CD4-positive, alpha-beta memory T cell (primary cell): ENCODE measurements at regions of chr1 and their contacts with region 1.

Region 1: GRCh38 chr1:88655685-88656299 is 28.3 kb upstream of the PKN2 start:
- DNase-seq: peak in 4 of 5 donors; percentile 27 to 34 (median 30)
- H3K4me3 ChIP-seq: no peak overlapping the region
- H3K4me3 Mint-ChIP-seq: no peak overlapping the region
- H3K27ac ChIP-seq: no peak overlapping the region
- H3K27ac Mint-ChIP-seq: peak overlapping the region in 1 of 7 donors; percentile 14
- H3K4me1 ChIP-seq: peaks cover 5% of the 10 kb centered on the region
- H3K4me1 Mint-ChIP-seq: peaks cover 2 to 8% (median 6%) of the 10 kb centered on the region in 4 donors
- H3K27me3 ChIP-seq: no peaks in the 10 kb centered on the region
- H3K27me3 Mint-ChIP-seq: peaks cover 0 to 4% of the 10 kb centered on the region in 2 donors

Region 2: GRCh38 chr1:88683541-88684481 is 28.0 kb after region 1 on chr1 and contains the start of gene PKN2:
- CTCF ChIA-PET with region 1: interaction called, 53 read pairs
- POLR2A ChIA-PET with region 1: interaction called, 16 read pairs
- intact Hi-C with region 1: loop called (anchors 1 kb)
- DNase-seq: peak; percentile 97 to 98 (median 98)
- H3K4me3 ChIP-seq: peak within 1 kb of the TSS; percentile 43 to 82
- H3K4me3 Mint-ChIP-seq: peak within 1 kb of the TSS; percentile 95 to 99 (median 97)
- H3K27ac ChIP-seq: peak within 1 kb of the TSS; percentile 85
- H3K27ac Mint-ChIP-seq: peak within 1 kb of the TSS; percentile 96 to 99 (median 98)
- H3K4me1 ChIP-seq: peaks cover 39% of the 10 kb centered on the region
- H3K4me1 Mint-ChIP-seq: peaks cover 15 to 58% (median 24%) of the 10 kb centered on the region in 4 donors
- H3K27me3 ChIP-seq: no peaks in the 10 kb centered on the region
- H3K27me3 Mint-ChIP-seq: no peaks in the 10 kb centered on the region
- total RNA-seq, gene PKN2: 38.6 to 42.0 TPM

Region 3: DNA sequence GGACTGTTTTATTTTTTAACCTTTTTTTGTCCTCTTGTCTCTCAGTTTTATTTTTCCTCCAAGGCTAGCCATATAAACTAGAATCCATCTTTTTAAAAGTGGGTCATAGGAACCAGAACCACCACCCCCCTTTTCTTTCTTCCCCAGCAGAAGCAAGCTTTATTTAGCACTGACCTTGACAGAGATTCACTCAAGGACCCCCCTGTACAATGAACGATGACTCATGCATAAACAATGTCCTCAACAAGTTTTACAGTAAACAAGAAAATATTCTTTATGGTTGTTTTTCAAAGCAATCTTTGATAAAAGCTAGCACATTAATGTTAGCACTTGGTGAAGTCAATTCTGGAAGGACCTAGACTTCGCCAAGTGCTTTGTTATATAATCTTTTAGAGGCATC is 42.3 kb after region 1 on chr1:
- CTCF ChIA-PET with region 1: no interaction called
- POLR2A ChIA-PET with region 1: no interaction called
- intact Hi-C with region 1: loop called (anchors 5 kb)
- DNase-seq: no peak
- H3K4me3 ChIP-seq: no peak overlapping the region
- H3K4me3 Mint-ChIP-seq: no peak overlapping the region
- H3K27ac ChIP-seq: no peak overlapping the region
- H3K27ac Mint-ChIP-seq: peak overlapping the region in 1 of 7 donors; percentile 16
- H3K4me1 ChIP-seq: peaks cover 14% of the 10 kb centered on the region
- H3K4me1 Mint-ChIP-seq: peaks cover 26 to 62% (median 37%) of the 10 kb centered on the region in 4 donors
- H3K27me3 ChIP-seq: no peaks in the 10 kb centered on the region
- H3K27me3 Mint-ChIP-seq: no peaks in the 10 kb centered on the region

Region 4: DNA sequence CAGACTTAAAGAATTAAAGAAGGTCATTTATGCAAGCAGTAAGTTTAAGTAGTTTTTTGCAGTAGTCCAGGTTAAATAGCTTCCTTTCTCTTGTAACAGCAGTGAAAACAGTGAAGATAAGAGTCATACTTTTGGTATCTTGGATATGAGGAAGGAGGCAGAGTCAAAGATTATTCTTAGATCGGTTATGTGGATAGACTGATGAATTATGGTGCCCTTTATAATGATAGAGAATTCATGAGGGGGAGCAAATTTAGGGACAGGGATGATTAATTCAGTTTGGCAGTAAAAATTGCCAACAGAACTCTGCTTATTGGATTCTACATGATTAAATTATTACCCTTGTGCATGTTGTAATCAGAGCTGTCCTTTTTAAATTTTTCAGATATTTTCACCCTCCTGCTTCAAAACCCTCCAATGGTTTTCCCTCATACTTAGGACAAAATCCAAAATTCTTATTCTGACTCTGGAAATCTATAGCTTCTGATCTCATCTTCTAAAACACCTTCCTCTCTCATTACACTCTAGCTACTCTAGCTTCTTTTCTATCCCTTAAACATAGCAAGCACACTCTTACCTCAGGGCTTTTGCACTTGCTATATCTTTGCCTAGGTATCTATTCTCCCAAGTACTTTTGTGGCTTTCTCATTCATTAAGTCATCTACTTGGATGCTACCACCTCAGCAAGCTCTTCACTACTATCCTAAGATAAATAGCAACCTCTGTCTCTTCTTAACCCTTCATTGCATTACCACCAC is 108.0 kb after region 1 on chr1:
- CTCF ChIA-PET with region 1: no interaction called
- POLR2A ChIA-PET with region 1: no interaction called
- intact Hi-C with region 1: loop called (anchors 10 kb)
- DNase-seq: no peak
- H3K4me3 ChIP-seq: no peak overlapping the region
- H3K4me3 Mint-ChIP-seq: no peak overlapping the region
- H3K27ac ChIP-seq: no peak overlapping the region
- H3K27ac Mint-ChIP-seq: peak overlapping the region in 4 of 7 donors; percentile 2 to 83 (median 9)
- H3K4me1 ChIP-seq: no peaks in the 10 kb centered on the region
- H3K4me1 Mint-ChIP-seq: peaks cover 4 to 25% (median 11%) of the 10 kb centered on the region in 4 donors
- H3K27me3 ChIP-seq: no peaks in the 10 kb centered on the region
- H3K27me3 Mint-ChIP-seq: no peaks in the 10 kb centered on the region

Region 5: DNA sequence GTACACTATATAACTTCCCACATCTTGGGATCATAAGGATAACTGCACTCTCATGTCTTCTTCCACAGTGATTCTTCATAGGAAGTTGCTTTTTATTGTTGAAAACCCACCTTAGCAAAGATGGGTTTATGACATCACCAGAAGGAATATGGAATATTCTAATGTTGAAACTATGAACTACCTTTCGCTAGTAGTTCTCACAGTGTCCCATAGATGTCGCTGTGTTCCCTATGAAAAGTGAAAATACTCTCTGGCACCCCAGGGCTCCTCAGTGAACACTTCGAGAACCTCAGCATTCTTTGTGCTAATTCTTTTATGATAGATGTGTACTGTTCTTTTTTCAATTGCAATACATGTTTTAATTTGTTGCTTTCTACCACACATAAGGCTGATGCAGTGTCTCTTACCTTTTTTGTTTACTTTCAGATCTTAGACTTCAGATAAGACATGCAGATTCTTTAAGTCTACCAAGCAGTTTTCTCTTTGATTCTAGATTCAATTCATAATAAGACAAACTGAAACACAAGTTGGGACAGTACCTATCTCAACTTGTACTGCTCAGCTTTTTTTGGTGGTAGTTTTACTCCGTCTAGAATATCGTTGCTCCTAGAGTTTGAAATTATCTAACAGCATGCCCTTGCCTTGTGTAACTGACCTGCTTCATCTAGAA is 144.7 kb after region 1 on chr1:
- CTCF ChIA-PET with region 1: interaction called, 5 read pairs
- POLR2A ChIA-PET with region 1: no interaction called
- intact Hi-C with region 1: loop called (anchors 2 kb)
- DNase-seq: peak in 4 of 5 donors; percentile 18 to 45 (median 36)
- H3K4me3 ChIP-seq: no peak overlapping the region
- H3K4me3 Mint-ChIP-seq: peak overlapping the region in 4 of 8 donors; percentile 13 to 53 (median 39)
- H3K27ac ChIP-seq: no peak overlapping the region
- H3K27ac Mint-ChIP-seq: peak overlapping the region in 4 of 7 donors; percentile 20 to 80 (median 64)
- H3K4me1 ChIP-seq: no peaks in the 10 kb centered on the region
- H3K4me1 Mint-ChIP-seq: peaks cover 7 to 15% (median 12%) of the 10 kb centered on the region in 4 donors
- H3K27me3 ChIP-seq: no peaks in the 10 kb centered on the region
- H3K27me3 Mint-ChIP-seq: no peaks in the 10 kb centered on the region

Region 6: DNA sequence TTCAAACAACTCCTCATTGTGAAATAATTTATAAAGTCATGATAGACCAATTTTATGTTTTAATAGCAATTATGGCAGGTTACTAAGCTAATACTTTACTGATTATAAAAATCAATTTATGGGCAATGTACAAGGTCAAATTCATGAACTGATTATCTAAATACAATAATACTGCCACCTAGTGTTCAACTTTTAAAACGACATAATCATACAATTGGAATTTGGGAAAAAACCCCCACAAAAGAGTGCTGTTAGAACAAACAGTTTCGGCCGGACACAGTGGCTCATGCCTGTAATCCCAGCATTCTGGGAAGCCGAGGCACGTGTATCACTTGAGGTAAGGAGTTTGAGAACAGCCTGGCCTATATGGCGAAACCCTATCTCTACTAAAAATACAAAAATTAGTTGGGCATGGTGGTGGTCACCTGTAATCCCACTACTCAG is 221.6 kb after region 1 on chr1:
- CTCF ChIA-PET with region 1: interaction called, 73 read pairs
- POLR2A ChIA-PET with region 1: no interaction called
- intact Hi-C with region 1: loop called (anchors 1 kb)
- DNase-seq: peak; percentile 19 to 41 (median 30)
- H3K4me3 ChIP-seq: no peak overlapping the region
- H3K4me3 Mint-ChIP-seq: peak overlapping the region in 3 of 8 donors; percentile 8 to 59 (median 39)
- H3K27ac ChIP-seq: no peak overlapping the region
- H3K27ac Mint-ChIP-seq: peak overlapping the region in 3 of 7 donors; percentile 33 to 70 (median 35)
- H3K4me1 ChIP-seq: peaks cover 36% of the 10 kb centered on the region
- H3K4me1 Mint-ChIP-seq: peaks cover 32 to 67% (median 46%) of the 10 kb centered on the region in 4 donors
- H3K27me3 ChIP-seq: no peaks in the 10 kb centered on the region
- H3K27me3 Mint-ChIP-seq: no peaks in the 10 kb centered on the region